ENCODE measurements at regions of chr13 and their contacts with region 1.

Region 1: DNA sequence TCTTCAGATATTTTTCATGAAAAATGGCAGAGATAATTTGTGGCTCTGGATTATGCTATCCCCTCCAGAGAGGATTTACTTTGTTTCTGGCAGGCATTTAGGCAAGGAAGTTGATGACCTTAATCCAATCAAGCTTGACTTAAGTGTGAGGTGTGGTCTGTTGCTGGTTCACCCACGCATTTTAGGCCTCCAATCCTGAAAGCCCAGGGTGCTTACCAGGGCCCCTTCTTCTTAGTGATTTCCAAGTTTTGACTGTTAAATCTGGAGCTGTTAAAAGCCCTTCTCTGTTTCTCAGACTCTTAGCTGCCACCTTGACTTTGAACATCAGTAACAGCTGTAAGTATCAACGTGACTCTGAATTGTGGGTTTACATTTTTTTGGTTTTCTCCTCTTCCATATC is 161.8 kb downstream of the DNAJC15 start:
- DNase-seq: no peak
- H3K27ac ChIP-seq: no peak overlapping the region
- CTCF ChIP-seq: no peak

Region 2: DNA sequence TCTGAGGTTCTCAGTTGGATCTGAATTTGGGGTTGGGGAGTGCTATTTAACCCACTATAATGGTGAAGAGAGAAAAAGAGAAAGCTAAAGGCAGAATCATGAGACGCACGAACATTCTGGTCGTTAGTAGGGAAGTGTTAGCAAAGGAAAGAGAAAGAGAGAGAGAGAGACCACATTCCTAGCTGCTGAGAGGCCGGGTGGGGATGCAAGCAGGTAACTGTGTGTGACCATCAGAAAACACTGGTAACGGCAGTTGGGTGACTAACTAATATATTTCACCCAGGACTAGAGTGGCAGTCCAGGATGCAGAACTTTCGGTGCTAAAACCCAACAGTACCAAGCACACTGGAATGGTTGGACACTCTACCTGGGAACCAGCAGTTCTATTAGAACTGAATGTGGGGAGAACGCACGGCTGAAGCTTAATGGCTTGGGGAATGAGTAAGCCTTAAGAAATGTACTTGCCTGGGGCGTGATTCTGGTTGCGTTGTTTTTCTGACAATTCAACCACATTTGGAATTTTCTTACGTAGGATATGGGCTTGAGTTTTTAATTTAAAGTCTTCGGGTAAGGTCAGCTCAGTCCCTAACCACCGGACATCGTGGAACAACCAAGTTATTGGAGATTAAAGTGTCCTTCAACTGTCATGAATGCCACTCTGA is 31.7 kb before region 1 on chr13:
- CTCF ChIA-PET with region 1: no interaction called
- POLR2A ChIA-PET with region 1: no interaction called
- DNase-seq: peak; percentile 80
- H3K27ac ChIP-seq: peak overlapping the region; percentile 52; the same call in 1 of the 2 replicates
- CTCF ChIP-seq: no peak

Region 3: DNA sequence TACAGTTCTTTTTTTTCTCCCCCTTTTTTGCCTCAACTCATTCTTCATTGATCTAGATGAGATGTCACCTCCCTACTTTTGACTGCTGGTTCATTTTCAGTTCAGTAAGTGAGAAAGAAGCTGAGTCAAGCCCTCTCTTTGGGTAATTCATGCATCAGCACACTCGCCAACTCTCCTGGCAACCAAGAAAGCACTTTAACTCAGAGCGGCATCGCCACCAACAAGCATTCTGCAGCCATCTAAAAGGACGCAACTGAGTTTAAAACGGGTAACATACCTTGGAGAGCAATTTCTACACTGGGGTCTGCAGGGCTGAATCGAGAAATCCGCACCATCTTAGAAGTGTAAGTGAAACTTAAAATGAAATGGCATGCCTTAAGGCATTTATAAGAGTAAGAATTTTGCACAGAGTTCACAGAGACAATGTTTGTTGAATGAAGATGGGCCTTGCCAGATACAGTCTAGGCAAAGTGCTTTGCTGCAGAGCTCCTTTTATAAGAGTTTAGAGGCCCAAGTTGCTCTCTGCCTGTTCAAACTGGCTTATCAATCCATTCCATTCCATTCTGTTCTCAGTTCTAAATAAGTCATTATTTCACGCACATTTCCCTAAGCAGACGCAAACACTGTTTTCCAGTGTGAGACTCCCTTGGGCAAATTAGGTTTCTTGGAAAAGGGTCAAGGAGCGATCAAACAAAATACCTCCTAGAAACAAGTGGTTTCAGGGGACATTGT is 263.5 kb after region 1 on chr13:
- CTCF ChIA-PET with region 1: interaction called, 10 read pairs
- POLR2A ChIA-PET with region 1: no interaction called
- DNase-seq: no peak
- H3K27ac ChIP-seq: no peak overlapping the region
- CTCF ChIP-seq: no peak